ENCODE measurements at regions of chr12 and their contacts with region 1.

Region 1: DNA sequence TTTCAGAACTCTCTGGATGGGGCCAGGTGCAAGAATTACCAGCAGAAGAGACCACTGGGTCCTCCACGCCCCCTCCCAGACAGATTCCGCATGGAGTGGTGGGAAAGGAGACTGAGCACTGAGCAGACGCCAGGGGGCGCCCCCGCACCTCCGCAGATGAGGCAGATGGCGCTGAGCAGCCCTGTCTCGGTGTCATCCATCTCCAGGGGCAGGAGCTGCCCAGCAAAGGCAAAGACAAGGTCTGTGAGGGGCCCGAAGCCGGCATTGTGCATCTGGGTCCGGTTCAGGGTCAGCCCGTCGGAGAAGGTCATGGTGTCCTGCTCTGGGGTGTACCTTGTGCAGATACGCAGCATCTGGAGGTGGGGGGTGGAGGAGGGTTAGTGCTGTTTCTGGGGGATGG is 6.3 kb upstream of the ITGB7 start:
- DNase-seq: peak; percentile 71 to 90
- ATAC-seq: peak; percentile 66

Region 2: DNA sequence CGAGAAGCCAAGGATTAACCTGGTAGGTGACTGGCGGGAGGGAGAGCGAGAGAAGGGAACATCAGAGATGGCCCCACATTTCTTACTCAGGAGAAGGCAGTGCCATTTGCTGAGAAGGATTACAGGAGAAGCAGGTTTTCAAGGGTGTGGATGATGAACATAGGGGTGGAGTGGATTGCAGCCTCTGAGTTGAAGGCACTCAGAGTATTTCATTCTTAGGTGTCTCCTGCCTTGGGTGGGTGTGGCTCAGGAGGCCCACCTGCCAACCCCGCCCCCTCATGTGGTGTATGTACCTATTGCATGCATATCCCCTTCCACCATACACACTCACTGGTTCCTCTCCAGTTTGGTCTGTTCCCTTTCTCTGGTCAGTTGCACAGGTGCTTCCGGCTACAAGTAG is 61.1 kb after region 1 on chr12:
- intact Hi-C with region 1: loop called in 1 of 2 experiments (anchors 10 kb)
- DNase-seq: no peak
- ATAC-seq: no peak

Region 3: DNA sequence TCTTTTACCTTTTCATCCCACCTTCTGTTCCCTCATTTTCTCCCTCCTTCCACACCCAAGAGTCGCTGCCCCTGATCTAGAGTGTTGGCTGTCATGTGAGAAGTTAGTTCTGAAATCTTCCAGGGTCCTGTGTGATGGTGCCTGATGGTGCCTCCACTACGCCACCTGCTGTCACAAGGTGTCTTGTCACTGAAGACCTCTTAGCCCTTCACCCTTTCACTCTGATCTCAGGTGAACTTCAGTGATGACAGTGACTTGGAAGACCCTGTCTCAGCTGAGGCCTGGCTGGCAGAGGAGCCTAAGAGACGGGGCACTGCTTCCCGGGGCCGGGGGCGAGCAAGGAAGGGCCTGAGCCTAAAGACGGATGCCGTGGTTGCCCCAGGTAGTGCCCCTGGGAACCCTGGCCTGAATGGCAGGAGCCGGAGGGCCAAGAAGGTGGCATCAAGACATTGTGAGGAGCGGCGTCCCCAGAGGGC is 74.4 kb after region 1 on chr12:
- intact Hi-C with region 1: loop called in 1 of 2 experiments (anchors 2 kb)
- DNase-seq: peak; percentile 50 to 89
- ATAC-seq: peak; percentile 84